CD14-positive monocyte (primary cell): ENCODE measurements at regions of chr14 and their contacts with region 1.

Region 1: DNA sequence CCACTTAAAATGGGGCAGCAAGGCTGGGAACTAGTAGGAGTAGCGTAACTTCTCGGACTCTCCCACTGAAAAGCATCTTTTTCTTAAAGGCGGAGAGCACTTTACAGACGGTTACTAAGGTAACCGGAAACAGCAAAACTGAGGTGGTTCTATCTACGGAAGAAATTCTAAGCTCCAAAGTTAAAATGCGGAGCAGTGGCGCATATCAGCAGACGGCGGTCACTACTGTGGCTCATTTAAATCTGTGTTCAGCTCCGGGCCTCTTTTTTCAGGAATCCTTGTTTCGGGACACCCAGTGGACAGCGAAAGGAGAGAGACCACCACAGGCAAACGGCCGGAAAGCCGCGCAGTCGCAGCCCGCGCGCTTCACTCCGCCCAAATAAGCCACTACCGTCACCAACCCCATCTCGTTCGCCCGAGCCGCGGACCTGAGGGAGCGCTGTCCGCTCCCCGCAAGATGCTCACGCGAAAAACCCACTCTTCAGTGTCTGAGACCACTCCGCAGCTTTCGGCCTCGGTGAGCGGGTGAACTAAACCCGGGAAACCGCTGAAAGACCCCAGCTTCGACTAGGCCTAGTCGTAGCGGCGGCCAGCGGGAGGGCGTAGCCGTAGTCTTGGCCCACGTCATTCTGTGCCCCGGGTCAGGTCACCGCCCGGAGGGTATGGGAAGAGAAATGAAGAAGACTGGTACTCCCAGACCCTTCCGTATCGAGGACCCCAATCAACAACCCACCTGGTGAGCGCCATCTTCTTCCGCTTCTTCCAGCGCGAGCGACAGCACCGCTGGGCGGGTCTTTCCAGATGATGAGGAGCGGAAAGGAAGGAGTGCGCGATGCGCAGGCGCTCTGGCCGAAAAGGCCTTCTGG is at the start of gene SNW1:
- DNase-seq: peak; percentile 91 to 96 (median 91)
- H3K4me3 ChIP-seq: peak within 1 kb of the TSS; percentile 83 to 94 (median 85)
- H3K4me3 Mint-ChIP-seq: peak within 1 kb of the TSS; percentile 93 to 97
- H3K27ac ChIP-seq: peak within 1 kb of the TSS; percentile 63 to 97
- H3K27ac Mint-ChIP-seq: peak within 1 kb of the TSS; percentile 92 to 99 (median 97)
- H3K4me1 ChIP-seq: peaks cover 12 to 28% of the 10 kb centered on the region in 2 donors
- H3K4me1 Mint-ChIP-seq: peaks cover 32% of the 10 kb centered on the region
- H3K27me3 ChIP-seq: no peaks in the 10 kb centered on the region
- H3K27me3 Mint-ChIP-seq: peaks cover 2 to 3% (median 2%) of the 10 kb centered on the region in 3 donors
- CTCF ChIP-seq: no peak
- polyA plus RNA-seq, gene SNW1: 17.4 to 74.6 (median 50.6) TPM

Region 2: GRCh38 chr14:77457522-77458290 is 302.9 kb before region 1 on chr14 and contains the starts of genes AHSA1 and VIPAS39:
- intact Hi-C with region 1: loop called in 1 of 2 experiments (anchors 2 kb)
- DNase-seq: peak; percentile 96 to 98 (median 97)
- H3K4me3 ChIP-seq: peak within 1 kb of the TSS; percentile 80 to 92 (median 87)
- H3K4me3 Mint-ChIP-seq: peak within 1 kb of the TSS; percentile 100
- H3K27ac ChIP-seq: peak within 1 kb of the TSS; percentile 66 to 85
- H3K27ac Mint-ChIP-seq: peak within 1 kb of the TSS; percentile 96 to 100 (median 99)
- H3K4me1 ChIP-seq: peaks cover 19 to 31% of the 10 kb centered on the region in 2 donors
- H3K4me1 Mint-ChIP-seq: peaks cover 25% of the 10 kb centered on the region
- H3K27me3 ChIP-seq: no peaks in the 10 kb centered on the region
- H3K27me3 Mint-ChIP-seq: no peaks in the 10 kb centered on the region
- CTCF ChIP-seq: no peak
- polyA plus RNA-seq, gene AHSA1: 59.5 to 72.5 (median 71.5) TPM
- polyA plus RNA-seq, gene VIPAS39: 8.1 to 17.8 (median 10.8) TPM

Region 3: DNA sequence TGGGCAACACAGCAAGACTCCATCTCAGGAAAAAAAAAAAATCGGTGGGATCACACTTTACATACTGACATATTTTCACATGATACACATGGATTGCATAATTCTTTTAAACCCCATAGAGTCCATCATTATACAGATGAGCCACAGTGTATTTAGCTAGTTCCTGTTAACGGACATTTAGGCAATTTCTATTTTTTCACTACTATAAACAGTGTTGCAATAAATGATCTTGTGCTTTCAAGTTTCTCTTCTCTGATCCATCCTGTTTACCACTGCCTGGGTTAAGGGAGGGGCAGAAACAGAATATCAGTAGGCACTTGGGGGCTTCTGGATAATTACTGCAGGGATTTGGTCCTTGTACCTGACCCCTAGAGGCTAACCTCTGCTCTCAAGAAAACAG is 100.8 kb before region 1 on chr14:
- intact Hi-C with region 1: loop called in 1 of 2 experiments (anchors 5 kb)
- DNase-seq: peak; percentile 75 to 94 (median 89)
- H3K4me3 ChIP-seq: peak overlapping the region; percentile 0 to 52 (median 34)
- H3K4me3 Mint-ChIP-seq: peak overlapping the region; percentile 68 to 72
- H3K27ac ChIP-seq: peak overlapping the region; percentile 87 to 96
- H3K27ac Mint-ChIP-seq: peak overlapping the region; percentile 88 to 98 (median 97)
- H3K4me1 ChIP-seq: peaks cover 55 to 66% of the 10 kb centered on the region in 2 donors
- H3K4me1 Mint-ChIP-seq: peaks cover 64% of the 10 kb centered on the region
- H3K27me3 ChIP-seq: no peaks in the 10 kb centered on the region
- H3K27me3 Mint-ChIP-seq: no peaks in the 10 kb centered on the region
- CTCF ChIP-seq: no peak

Region 4: DNA sequence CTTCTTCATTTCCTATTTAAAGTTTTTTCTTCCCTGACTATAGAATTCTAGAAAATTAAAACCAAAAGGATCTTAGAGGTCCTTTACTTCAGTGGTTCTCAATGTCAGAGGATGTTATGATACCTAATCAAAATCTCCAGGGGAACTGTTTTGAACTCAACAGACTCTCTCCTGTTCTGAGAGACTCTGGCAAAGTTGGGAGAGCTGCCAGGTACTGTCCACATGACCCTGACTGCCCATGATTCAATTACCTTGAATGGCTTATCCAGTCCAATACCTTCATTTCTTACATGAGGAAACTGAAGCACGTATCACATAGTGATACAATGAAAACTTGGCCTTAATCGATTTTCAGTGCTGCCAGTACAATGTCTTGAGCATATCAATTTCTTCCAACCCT is 69.4 kb before region 1 on chr14:
- intact Hi-C with region 1: no loop called
- DNase-seq: no peak
- H3K4me3 ChIP-seq: no peak overlapping the region
- H3K4me3 Mint-ChIP-seq: no peak overlapping the region
- H3K27ac ChIP-seq: no peak overlapping the region
- H3K27ac Mint-ChIP-seq: no peak overlapping the region
- H3K4me1 ChIP-seq: no peaks in the 10 kb centered on the region
- H3K4me1 Mint-ChIP-seq: no peaks in the 10 kb centered on the region
- H3K27me3 ChIP-seq: no peaks in the 10 kb centered on the region
- H3K27me3 Mint-ChIP-seq: peaks cover 0 to 1% (median 0%) of the 10 kb centered on the region in 3 donors
- CTCF ChIP-seq: no peak

Region 5: DNA sequence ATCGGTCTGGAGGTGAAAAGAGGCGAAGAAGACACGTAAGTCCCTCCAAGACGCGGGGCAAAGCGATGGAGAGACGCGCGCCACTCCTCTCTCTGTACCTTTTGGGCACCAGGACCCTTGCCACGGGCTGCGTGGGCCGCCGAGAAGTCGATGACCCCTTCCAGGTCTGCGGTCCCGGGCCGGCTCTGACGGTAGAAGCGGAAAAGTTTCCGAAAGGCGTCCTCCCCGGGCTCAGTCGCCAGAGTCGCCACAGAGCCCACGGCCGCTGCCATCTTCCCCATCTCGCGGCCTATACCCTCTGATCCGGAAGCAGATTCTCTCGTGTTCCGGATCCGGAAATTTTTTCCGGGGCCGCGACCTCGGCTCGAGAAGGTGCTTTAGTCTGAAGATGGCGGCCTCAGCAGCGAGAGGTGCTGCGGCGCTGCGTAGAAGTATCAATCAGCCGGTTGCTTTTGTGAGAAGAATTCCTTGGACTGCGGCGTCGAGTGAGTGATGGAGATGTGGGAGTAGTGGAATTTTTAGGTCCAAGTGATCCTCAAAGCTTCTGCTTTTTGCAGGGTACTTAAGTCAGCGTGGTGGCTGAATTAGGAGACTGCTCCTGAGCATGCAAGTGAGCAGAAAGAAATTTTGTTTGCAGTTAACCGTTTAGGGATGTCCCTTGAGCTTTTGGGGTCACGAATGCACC is 52.7 kb before region 1 on chr14 and contains the starts of genes ALKBH1 and SLIRP:
- intact Hi-C with region 1: loop called in 1 of 2 experiments (anchors 5 kb)
- DNase-seq: peak; percentile 80 to 85 (median 82)
- H3K4me3 ChIP-seq: peak within 1 kb of the TSS; percentile 98 to 100 (median 98)
- H3K4me3 Mint-ChIP-seq: peak within 1 kb of the TSS; percentile 92 to 97
- H3K27ac ChIP-seq: peak within 1 kb of the TSS; percentile 64 to 83
- H3K27ac Mint-ChIP-seq: peak within 1 kb of the TSS; percentile 62 to 97 (median 90)
- H3K4me1 ChIP-seq: peaks cover 23 to 32% of the 10 kb centered on the region in 2 donors
- H3K4me1 Mint-ChIP-seq: peaks cover 28% of the 10 kb centered on the region
- H3K27me3 ChIP-seq: no peaks in the 10 kb centered on the region
- H3K27me3 Mint-ChIP-seq: no peaks in the 10 kb centered on the region
- CTCF ChIP-seq: no peak
- polyA plus RNA-seq, gene ALKBH1: 3.4 to 4.5 (median 4.2) TPM
- polyA plus RNA-seq, gene SLIRP: 89.3 to 402 (median 323) TPM

Region 6: DNA sequence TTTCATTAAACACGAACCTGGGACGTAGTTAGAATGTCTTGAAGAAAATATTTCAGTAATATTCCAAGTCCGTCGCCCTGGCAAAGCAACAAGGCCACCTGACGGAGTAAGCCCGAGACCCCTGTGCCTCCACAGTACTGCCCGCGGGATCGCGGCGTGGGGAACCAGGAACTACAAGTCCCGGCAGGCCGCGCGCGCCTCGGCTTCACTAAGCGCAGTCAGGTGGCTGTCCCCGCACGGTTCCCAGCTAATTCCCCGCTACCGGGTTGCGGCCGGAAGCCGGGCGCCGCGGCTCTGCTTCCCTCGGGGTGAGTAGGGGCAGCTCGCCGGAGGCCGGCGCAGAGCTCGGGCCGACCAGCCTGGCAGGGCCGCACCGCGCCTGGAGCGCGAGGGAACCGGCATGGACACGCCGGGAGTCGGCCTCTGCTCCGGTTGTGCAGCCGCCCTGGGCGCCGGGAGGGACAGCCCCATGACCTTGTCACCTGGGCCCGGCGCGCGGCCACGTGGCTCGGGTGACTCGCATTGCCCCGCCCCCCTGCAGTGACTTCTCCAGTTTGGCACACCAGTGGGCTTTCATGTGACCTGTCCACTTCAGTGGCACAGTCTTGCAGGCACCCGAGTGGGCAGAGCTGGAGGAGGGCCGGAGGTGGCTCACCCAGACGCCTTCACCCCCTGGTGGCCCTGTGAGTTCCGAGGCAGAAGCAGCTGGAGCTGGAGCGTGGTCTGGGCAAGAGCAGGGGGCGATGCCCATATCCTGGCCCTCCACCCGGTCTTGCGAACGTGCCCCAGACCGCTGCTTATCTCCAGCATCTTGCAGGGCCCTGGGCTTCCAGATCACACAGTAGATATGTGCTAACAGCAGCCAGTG is 39.5 kb after region 1 on chr14 and contains the start of gene ADCK1:
- intact Hi-C with region 1: loop called (anchors 5 kb)
- DNase-seq: peak; percentile 86 to 90 (median 88)
- H3K4me3 ChIP-seq: peak within 1 kb of the TSS; percentile 57 to 81 (median 60)
- H3K4me3 Mint-ChIP-seq: peak within 1 kb of the TSS; percentile 84 to 93
- H3K27ac ChIP-seq: peak within 1 kb of the TSS; percentile 63 to 86
- H3K27ac Mint-ChIP-seq: peak within 1 kb of the TSS; percentile 80 to 95 (median 91)
- H3K4me1 ChIP-seq: peaks cover 9 to 11% of the 10 kb centered on the region in 2 donors
- H3K4me1 Mint-ChIP-seq: peaks cover 11% of the 10 kb centered on the region
- H3K27me3 ChIP-seq: no peaks in the 10 kb centered on the region
- H3K27me3 Mint-ChIP-seq: peaks cover 0 to 5% (median 2%) of the 10 kb centered on the region in 3 donors
- CTCF ChIP-seq: no peak
- polyA plus RNA-seq, gene ADCK1: 3.7 to 33.0 (median 5.4) TPM

Region 7: DNA sequence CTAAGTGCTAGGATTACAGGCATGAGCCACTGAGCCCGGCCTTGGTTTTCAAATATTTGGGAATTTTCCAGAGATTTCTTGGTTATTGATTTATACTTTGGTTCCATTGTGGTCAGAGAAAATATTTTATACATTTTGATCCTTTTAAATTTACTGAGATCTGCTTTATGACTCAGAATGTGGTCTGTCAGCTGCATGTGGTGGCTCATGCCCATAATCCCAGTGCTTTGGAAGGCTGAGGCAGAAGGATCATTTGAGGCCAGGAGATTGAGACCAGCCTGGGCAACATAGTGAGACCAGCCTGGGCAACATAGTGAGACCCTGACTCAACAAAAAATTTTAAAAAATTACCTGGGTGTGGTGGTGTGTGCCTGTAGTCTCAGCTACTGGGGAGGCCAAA is 89.1 kb after region 1 on chr14:
- intact Hi-C with region 1: no loop called
- DNase-seq: no peak
- H3K4me3 ChIP-seq: no peak overlapping the region
- H3K4me3 Mint-ChIP-seq: no peak overlapping the region
- H3K27ac ChIP-seq: no peak overlapping the region
- H3K27ac Mint-ChIP-seq: peak overlapping the region in 2 of 7 donors; percentile 18 to 27
- H3K4me1 ChIP-seq: peaks cover 4 to 5% of the 10 kb centered on the region in 2 donors
- H3K4me1 Mint-ChIP-seq: peaks cover 7% of the 10 kb centered on the region
- H3K27me3 ChIP-seq: no peaks in the 10 kb centered on the region
- H3K27me3 Mint-ChIP-seq: no peaks in the 10 kb centered on the region
- CTCF ChIP-seq: no peak